AG04449 (cell line): ENCODE measurements at regions of chr12 and their contacts with region 1.

Region 1: GRCh38 chr12:57005980-57006808 is at the start of gene ZBTB39:
- DNase-seq: no peak
- H3K4me3 ChIP-seq: peak within 1 kb of the TSS; percentile 78
- CTCF ChIP-seq: peak; percentile 64

Region 2: GRCh38 chr12:56751712-56752598 is 254.2 kb before region 1 on chr12 and contains the start of gene PRIM1:
- CTCF ChIA-PET with region 1: interaction called, 276 read pairs
- POLR2A ChIA-PET with region 1: no interaction called
- DNase-seq: no peak
- H3K4me3 ChIP-seq: peak within 1 kb of the TSS; percentile 96
- CTCF ChIP-seq: no peak

Region 3: GRCh38 chr12:56987551-56988053 is 18.6 kb before region 1 on chr12:
- CTCF ChIA-PET with region 1: interaction called, 92 read pairs
- POLR2A ChIA-PET with region 1: no interaction called
- DNase-seq: no peak
- H3K4me3 ChIP-seq: no peak overlapping the region
- CTCF ChIP-seq: peak; percentile 97

Region 4: DNA sequence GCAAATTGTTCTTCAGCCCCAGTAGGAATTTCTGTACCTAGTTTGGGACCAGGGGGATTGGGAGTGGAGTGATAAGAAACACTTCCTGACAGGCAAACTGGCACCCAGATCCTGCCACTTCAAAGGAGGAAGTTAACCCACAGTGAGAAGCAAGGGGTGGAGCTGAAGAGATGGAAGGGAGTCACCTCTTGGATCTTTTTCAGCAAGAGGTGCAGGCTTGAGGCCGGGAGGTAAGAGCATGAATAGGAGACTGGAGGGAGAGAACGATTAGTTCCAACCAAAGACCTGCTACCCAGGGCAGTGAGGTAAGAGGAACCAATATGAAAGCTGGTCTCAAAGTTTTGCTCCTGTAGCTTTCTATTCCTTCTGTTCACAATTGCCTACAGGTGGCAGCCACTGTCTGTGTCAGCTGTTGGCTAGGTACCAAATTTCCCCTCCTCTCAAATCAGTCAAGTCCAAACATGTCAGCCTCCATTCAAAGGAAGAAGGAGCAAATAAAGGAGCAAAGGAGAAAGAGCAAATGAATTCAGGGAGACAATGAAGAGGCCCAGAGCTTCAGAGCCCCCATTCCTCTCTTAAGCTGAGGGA is 25.0 kb after region 1 on chr12:
- CTCF ChIA-PET with region 1: interaction called, 25 read pairs
- POLR2A ChIA-PET with region 1: no interaction called
- DNase-seq: no peak
- H3K4me3 ChIP-seq: no peak overlapping the region
- CTCF ChIP-seq: no peak

Region 5: DNA sequence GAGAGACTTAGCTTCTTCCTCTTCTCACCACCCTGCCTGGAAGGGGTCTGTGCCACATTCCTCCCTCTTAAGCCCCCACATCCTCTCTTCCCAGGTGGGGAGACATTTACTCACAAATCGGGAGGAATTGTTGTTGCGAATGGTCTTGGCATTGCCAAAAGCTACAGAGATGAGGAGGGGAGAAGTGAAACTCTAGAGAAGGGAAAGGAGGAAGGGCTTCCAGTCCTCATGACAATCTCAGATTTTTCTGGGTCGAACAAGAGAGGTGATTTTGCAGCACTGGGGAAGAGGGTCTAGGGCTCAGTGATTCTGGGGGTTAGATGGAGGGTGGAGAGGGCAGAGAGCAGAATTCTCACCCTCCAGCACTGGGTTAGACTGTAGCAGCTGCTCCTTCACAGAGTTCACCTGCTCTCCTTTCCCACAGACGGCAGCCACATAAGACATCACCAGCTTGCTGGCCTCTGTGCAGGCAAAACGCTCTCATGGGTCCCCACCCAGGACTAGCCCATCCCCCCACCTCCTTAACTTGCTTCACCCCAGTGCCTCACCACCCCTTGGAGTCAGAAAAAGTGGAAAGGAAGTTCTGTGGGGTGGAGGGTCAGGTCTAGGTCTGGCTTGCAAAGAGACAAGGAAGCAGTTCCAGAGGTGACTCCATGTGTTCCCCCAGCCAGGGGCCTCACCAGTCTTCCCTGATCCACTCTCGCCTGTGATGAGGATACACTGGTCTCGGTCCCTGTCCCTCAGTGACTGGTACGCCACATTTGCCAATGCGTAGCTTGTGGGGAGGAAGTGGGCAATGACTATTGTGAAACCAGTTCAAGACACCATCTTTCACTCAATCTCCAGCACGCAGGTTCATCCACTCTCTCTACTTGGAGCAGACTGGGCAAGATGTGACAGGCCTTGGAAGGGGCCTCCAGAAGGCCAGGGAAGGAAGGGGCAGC is 41.0 kb after region 1 on chr12:
- CTCF ChIA-PET with region 1: interaction called, 92 read pairs
- POLR2A ChIA-PET with region 1: no interaction called
- DNase-seq: no peak
- H3K4me3 ChIP-seq: no peak overlapping the region
- CTCF ChIP-seq: no peak

Region 6: DNA sequence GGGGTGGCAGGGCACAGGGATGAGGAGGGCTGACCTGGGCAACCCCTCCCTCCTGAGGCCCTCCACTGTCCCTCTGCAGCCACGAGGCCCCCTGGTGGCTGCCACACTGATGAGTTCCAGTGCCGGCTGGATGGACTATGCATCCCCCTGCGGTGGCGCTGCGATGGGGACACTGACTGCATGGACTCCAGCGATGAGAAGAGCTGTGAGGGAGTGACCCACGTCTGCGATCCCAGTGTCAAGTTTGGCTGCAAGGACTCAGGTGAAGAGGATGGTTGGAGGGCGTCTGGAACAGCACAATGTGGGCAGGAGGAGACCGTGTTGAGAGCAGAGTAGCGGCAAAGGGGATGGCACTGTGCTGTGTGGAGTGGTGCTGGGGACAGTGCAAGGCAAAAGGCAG is 166.9 kb after region 1 on chr12:
- CTCF ChIA-PET with region 1: no interaction called
- POLR2A ChIA-PET with region 1: no interaction called
- DNase-seq: no peak
- H3K4me3 ChIP-seq: no peak overlapping the region
- CTCF ChIP-seq: peak; percentile 74

Region 7: DNA sequence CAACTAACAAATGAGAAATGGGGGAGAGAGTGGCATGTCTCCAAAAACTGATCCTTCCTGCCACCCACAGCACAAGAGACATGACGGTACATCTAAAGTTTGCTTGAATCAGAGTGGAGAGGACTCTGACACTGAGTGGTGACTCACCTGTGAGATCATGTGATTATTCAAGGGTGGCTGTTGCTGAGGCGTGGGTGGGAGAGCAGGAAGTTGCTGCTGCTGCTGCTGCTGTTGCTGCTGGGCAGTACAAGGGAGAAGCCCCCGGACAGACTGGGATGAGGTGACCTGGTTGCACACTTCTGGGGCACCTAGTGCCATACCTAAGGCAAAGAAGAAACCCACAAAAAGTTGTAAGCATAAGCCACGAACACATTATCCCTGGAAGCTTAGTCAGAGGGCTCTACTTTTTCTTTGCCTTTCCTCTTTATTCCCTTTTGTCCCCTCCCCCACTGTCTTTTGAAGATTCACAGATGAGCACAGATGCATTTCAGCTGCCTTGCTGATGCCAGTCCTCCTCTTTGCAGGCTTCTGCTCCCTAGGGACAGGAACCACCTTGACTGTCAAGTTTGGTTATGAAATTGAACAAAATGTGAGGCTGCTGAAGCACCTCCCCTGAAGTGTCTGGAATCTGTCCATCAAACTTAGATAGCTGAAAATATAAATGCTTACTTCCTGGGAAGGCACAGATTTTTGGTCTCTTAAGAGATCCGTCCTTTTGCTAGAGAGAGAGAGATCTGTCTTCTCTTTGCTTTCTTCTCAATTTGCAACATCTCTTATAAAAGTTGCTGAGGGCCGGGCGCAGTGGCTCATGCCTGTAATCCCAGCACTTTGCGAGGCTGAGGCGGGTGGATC is 274.2 kb after region 1 on chr12:
- CTCF ChIA-PET with region 1: no interaction called
- POLR2A ChIA-PET with region 1: no interaction called
- DNase-seq: peak; percentile 79
- H3K4me3 ChIP-seq: no peak overlapping the region
- CTCF ChIP-seq: no peak